ENCODE measurements at regions of chr4 and their contacts with region 1.

Region 1: DNA sequence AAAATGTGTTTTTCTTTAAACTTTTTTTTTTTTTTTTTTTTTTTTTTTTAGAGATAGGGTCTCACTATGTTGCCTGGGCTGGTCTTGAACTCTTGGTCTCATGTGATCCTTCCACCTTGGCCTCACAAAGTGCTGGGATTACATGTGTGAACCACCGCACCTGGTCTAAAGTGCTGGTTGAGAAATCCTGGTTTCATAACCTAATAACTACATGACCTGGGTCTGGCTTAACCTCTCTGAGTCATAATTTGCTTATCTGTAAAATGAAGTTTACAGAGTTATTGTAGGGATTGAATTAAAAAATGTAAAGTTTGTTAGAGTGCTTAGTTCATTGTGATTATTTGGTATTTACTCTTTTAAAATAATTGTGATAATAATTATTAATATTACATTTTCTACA is 5.1 kb downstream of the HSD17B13 start:
- DNase-seq: peak; percentile 7
- H3K4me3 Mint-ChIP-seq: no peak overlapping the region
- H3K27ac Mint-ChIP-seq: no peak overlapping the region
- H3K4me1 Mint-ChIP-seq: no peaks in the 10 kb centered on the region
- H3K27me3 Mint-ChIP-seq: no peaks in the 10 kb centered on the region
- CTCF ChIP-seq: no peak

Region 2: GRCh38 chr4:87912164-87913004 is 594.8 kb after region 1 on chr4:
- CTCF ChIA-PET with region 1: interaction called, 11 read pairs
- intact Hi-C with region 1: no loop called
- DNase-seq: no peak
- H3K4me3 Mint-ChIP-seq: peak overlapping the region; percentile 16
- H3K27ac Mint-ChIP-seq: peak overlapping the region; percentile 75
- H3K4me1 Mint-ChIP-seq: peaks cover 27% of the 10 kb centered on the region
- H3K27me3 Mint-ChIP-seq: no peaks in the 10 kb centered on the region
- CTCF ChIP-seq: no peak

Measured in Calu3 (cell line).